ENCODE measurements at regions of chr3 and their contacts with region 1.

Region 1: DNA sequence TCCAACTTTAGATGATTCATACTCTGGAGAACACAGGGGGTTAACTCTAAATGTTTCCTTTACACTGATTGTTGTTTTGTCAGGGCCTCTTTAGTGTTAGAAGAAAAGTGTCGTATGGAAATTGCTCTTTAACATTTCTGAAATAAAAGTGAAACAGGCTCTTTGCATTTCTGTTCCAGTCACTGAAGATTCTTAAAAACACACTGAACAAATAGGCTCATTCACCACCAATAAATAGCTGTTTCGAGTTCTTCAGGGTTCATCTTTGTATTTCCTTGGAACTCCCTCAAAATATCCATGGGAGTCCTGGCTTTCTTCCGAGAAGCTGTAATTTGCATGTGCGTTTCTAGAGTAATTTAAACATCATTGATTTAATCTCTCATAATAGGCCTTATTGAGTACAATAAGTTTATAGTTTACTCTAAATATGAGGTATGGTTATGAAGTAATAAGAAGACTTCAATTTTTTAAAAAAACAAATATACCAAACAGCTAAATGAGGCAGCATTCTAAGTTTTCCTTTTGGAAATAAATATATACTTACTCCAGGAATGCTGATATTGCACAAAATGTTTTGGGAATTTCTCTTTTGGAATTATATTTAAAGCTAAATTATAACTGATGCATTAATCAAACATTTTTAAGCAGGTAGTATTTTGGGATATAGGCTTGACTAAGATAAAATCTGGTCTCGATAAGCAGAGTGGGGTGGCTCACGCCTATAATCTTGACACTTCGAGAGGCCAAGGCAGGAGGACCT is 327.4 kb downstream of the EPHA3 start:
- ATAC-seq: peak in 3 of 8 experiments; percentile 24 to 68 (median 43)
- H3K4me3 ChIP-seq: no peak overlapping the region
- H3K27ac ChIP-seq: no peak overlapping the region
- H3K4me1 ChIP-seq: no peaks in the 10 kb centered on the region

Region 2: DNA sequence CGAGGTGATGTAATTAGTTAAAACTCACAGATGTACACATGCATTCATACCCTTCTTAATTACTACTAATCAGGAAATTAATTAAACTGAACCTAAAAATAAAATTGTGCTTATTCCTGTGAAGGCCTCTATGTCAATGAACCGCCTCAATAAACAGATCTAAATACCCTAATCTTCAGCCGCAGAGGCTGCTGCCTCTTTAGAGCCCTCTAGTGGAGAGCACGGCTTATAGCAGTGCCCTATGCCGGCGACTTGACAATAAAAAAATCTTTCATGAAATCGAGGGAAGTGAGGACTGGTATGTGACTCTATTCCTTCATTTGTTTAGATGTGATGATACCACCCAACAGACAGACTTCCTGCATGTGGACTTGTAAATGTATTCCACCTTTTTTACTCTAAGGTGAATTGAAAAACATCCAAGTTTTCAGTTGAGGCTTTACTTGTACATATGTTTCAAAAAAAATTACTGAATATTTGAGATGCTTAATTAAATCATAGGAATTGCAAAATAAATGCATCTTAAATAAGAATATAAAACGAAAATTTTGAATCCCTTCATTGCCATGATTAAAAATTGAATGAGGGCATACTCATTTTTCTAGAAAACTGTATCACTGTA is 335.7 kb before region 1 on chr3:
- in situ Hi-C with region 1: no loop called
- ATAC-seq: peak in 5 of 8 experiments; percentile 29 to 75 (median 51)
- H3K4me3 ChIP-seq: no peak overlapping the region
- H3K27ac ChIP-seq: no peak overlapping the region
- H3K4me1 ChIP-seq: no peaks in the 10 kb centered on the region

Region 3: DNA sequence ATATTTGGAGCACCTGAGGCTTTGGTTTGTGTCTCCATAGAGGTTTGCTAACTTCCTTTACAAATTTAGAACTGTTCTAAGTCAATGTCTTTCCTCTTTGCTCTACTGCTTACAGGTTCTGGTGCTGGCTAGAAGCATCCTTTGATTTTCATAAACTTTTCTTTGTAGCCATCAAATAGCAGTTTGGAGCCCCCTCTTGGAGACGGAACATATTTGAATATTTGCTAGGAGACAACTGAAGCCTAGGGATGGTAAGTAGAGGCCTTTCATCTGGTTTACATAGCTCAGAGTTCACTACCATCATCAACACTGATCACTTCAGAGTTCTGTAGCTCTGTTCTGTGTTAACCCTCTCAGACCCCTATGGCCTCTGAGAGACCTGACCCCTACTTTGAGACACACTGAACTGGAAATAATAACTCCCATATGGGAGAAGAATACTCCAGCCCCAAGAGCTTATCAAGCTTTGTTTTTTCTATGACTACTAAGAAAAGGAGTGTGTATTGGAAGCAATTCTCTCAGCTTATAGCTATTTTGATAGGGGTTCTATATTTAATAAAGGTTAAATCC is 93.0 kb after region 1 on chr3:
- in situ Hi-C with region 1: loop called in 1 of 9 experiments (anchors 25 kb)
- ATAC-seq: peak in 3 of 8 experiments; percentile 16 to 60 (median 35)
- H3K4me3 ChIP-seq: no peak overlapping the region
- H3K27ac ChIP-seq: no peak overlapping the region
- H3K4me1 ChIP-seq: peaks cover 17 to 31% of the 10 kb centered on the region in 2 donors

Region 4: DNA sequence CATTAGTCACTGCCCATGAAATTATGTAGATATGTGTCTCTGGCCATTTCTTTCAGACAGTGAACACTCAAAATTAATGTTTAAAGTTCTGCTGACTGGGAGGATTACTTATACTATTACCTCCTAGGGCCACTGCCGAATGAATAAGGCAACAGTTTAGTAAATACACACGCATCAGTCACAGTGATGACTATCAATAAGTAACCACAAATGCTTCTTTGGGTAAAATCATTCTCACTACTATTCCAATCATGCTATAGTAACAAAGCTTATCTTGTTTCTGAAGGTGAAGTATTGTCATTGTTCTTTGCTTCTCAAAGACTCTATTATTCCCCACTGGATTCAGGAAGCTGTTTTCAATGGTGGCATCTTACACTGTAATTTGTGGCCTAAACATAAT is 151.5 kb after region 1 on chr3:
- in situ Hi-C with region 1: no loop called
- ATAC-seq: no peak
- H3K4me3 ChIP-seq: no peak overlapping the region
- H3K27ac ChIP-seq: no peak overlapping the region
- H3K4me1 ChIP-seq: no peaks in the 10 kb centered on the region

Region 5: GRCh38 chr3:89908706-89909213 is 474.0 kb after region 1 on chr3:
- in situ Hi-C with region 1: no loop called
- ATAC-seq: peak in 3 of 8 experiments; percentile 47 to 70 (median 59)
- H3K4me3 ChIP-seq: no peak overlapping the region
- H3K27ac ChIP-seq: no peak overlapping the region
- H3K4me1 ChIP-seq: no peaks in the 10 kb centered on the region

Measured in motor neuron (in vitro differentiated cells).